ENCODE measurements at regions of chr4 and their contacts with region 1.

Region 1: DNA sequence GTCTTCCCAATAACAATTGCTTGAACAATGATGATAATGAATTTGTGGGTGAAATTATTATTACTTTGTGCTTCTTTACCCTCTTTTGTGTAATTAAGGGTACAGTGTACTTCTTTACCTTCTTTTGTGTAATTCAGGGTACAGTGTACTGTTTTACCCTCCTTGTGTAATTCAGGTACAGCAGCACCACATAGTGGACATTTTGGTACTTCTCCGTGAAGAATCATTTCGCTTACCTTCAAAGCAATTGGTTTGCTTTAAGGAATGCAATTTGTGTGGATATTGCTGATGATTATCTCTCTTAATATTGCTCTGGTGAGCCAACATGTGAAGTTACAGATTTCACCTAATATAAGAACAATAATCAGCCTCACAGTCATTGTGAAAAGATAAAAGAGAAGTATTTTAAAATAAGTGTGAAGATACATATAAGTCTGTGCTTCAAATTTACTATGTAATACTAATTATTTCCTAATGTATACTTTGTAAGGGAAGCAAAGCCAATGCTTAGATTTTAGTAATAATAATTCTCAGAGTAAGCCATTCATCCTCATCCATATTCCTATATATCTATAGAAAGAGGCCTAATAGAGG is 27.2 kb upstream of the SEC24B start:
- DNase-seq: peak; percentile 49
- H3K4me3 ChIP-seq: no peak overlapping the region
- H3K27ac ChIP-seq: no peak overlapping the region
- H3K4me1 ChIP-seq: peaks cover 9% of the 10 kb centered on the region
- H3K27me3 ChIP-seq: peaks cover 4% of the 10 kb centered on the region
- CTCF ChIP-seq: peak; percentile 77 to 84

Region 2: GRCh38 chr4:108834835-108835384 is 571.5 kb before region 1 on chr4:
- CTCF ChIA-PET with region 1: no interaction called
- dilution Hi-C with region 1: no loop called
- in situ Hi-C with region 1: loop called (anchors 10 to 25 kb)
- intact Hi-C with region 1: loop called (anchors 1 kb)
- DNase-seq: peak; percentile 50
- H3K4me3 ChIP-seq: no peak overlapping the region
- H3K27ac ChIP-seq: no peak overlapping the region
- H3K4me1 ChIP-seq: peaks cover 12% of the 10 kb centered on the region
- H3K27me3 ChIP-seq: peaks cover 6% of the 10 kb centered on the region
- CTCF ChIP-seq: peak; percentile 72 to 74

Region 3: GRCh38 chr4:108937066-108937465 is 469.4 kb before region 1 on chr4:
- CTCF ChIA-PET with region 1: no interaction called
- dilution Hi-C with region 1: no loop called
- in situ Hi-C with region 1: no loop called
- intact Hi-C with region 1: loop called (anchors 10 kb)
- DNase-seq: no peak
- H3K4me3 ChIP-seq: no peak overlapping the region
- H3K27ac ChIP-seq: no peak overlapping the region
- H3K4me1 ChIP-seq: no peaks in the 10 kb centered on the region
- H3K27me3 ChIP-seq: peaks cover 8% of the 10 kb centered on the region
- CTCF ChIP-seq: no peak

Region 4: DNA sequence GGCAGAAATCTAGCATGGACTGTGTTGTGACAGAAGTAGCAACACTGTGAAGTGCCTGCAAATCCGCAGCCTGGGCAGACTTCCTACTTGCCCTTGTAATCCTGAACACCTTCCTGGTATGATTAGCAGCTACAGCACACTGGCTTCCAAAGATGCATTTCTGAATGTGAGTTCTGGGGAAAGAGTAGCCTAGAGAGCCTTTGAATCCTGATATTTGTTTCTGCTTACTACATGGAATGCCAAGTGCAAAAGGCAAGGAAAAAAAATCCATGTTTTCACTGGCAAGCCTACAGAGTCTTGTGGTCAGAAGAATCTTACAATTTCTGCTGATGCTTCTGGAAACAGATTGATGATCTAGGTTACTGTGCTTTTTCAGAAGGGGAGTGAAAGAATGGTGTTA is 327.7 kb before region 1 on chr4:
- CTCF ChIA-PET with region 1: no interaction called
- dilution Hi-C with region 1: no loop called
- in situ Hi-C with region 1: no loop called
- intact Hi-C with region 1: loop called (anchors 10 kb)
- DNase-seq: no peak
- H3K4me3 ChIP-seq: no peak overlapping the region
- H3K27ac ChIP-seq: no peak overlapping the region
- H3K4me1 ChIP-seq: no peaks in the 10 kb centered on the region
- H3K27me3 ChIP-seq: no peaks in the 10 kb centered on the region
- CTCF ChIP-seq: no peak

Region 5: GRCh38 chr4:109419679-109420078 is 13.2 kb after region 1 on chr4:
- CTCF ChIA-PET with region 1: no interaction called
- dilution Hi-C with region 1: no loop called
- in situ Hi-C with region 1: no loop called
- intact Hi-C with region 1: no loop called
- DNase-seq: no peak
- H3K4me3 ChIP-seq: no peak overlapping the region
- H3K27ac ChIP-seq: no peak overlapping the region
- H3K4me1 ChIP-seq: no peaks in the 10 kb centered on the region
- H3K27me3 ChIP-seq: no peaks in the 10 kb centered on the region
- CTCF ChIP-seq: no peak

Measured in mammary epithelial cell (primary cell).